ENCODE measurements at regions of chr19 and their contacts with region 1.

Region 1: DNA sequence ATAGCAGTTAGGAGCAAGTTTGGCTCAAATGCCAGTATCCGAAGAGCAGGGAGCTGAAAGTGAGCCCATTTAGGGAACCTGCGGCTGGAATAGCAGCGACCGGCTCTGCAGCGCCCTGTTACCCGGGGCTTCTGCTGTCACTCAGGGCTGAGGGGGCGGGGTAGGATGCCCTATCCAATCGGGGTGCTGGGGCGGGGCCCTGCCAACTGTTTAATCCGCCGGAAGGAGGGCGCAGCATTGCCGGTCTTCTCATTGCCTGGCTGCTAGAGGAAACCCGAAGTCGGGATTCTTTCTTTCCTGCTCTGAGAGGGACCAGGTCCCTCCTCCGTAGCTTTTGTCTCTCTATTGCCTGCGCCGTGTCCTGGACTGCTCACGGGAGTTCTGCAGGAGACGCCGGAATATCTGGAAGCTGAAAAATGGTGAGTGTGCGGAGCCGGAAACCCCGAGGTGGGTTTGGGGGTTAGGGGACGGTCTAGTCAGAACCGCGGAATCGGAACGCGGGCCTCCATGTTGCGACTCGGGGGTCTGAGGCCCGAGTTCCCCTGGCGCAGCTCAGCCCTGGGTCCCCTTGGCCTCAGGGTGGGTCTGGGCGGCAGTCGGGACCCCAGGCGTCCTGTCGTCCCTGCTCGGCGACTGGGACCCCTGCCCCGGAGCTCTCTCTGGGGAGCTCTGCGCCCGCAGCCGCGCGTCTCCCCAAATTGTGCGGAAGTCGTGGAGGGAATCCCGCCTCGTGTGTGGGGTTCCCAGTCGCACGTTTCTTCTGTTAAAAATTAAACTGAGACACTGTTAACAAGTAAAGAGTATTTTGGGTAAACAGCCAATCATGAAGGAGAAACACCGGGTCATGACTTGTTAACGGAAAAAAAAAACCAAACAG is 22.8 kb downstream of the ZNF763 start:
- DNase-seq: peak; percentile 95 to 99 (median 98)
- H3K4me3 ChIP-seq: peak overlapping the region; percentile 92 to 99 (median 98)
- H3K27ac ChIP-seq: peak overlapping the region; percentile 91 to 94
- H3K4me1 ChIP-seq: peaks cover 0 to 13% (median 12%) of the 10 kb centered on the region in 4 experiments
- H3K27me3 ChIP-seq: no peaks in the 10 kb centered on the region

Region 2: DNA sequence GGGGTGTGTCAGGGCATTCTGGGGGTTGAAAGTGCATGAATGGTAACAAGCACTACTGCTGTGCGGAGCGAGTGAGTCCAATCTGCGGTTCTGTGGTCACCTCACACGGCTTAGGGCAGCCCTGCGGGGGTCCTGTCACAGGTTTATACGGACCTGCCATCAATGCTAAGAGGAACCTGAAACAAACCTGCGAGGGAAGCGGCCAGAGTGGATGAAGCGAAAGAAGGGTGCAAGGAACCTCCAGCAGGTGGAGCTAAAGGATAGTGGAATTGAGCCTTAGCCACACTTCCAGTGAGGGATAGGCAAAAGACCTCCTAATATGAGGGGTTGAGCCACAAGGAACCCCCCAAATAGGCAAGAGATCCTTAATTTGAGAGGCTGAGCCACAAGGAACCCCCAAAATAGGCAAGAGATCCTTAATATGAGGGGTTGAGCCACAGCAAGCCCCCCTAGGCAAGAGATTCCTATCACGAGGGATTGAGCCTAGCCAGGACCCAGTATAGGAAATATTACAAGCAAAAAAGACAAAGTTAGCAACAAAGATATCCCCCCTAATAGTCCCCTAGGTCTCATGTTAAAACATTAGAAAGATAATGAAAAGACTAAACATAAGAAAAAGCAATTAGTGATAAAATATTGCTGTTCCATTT is 106.4 kb before region 1 on chr19:
- CTCF ChIA-PET with region 1: interaction called, 17 read pairs
- POLR2A ChIA-PET with region 1: no interaction called
- DNase-seq: peak; percentile 76 to 88 (median 83)
- H3K4me3 ChIP-seq: peak overlapping the region in 1 of 7 experiments; percentile 38
- H3K27ac ChIP-seq: no peak overlapping the region
- H3K4me1 ChIP-seq: peaks cover 0 to 21% (median 9%) of the 10 kb centered on the region in 4 experiments
- H3K27me3 ChIP-seq: no peaks in the 10 kb centered on the region

Region 3: DNA sequence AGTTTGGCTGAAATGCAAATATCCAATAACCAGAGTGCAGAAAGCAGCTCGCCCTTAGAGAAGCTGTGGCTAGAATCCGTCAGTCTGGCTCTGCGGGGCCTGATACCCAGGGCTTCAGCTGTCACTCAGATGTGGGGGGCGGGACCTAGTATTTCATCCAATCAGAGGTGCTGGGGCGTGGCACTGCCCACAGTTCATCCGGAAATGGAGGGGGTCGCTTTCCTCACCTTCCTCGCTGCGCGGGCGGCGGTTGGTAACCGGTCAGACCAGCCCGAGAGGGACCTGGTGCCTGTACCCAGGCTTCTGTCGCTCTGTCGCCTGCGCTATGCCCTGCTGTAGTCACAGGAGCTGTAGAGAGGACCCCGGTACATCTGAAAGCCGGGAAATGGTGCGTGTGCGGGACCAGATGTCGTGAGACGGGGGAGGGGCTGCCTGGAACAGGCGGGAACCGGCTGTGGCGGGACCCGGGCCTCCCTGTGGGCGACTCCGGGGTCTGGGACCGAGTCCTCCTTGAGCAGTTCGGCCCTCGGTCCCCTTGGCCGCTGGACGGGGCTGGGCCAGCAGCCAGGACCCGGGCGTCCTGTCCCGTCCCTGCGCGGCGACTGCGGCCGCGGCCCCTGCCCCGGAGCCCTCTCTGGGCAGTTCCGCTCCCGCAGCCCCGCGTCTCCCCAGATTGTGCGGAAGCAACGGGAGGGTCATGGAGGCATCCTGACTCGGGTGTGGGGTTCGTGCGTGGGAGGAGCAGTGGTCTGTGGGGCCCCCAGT is 62.6 kb before region 1 on chr19 and contains the start of gene ZNF700:
- CTCF ChIA-PET with region 1: interaction called, 65 read pairs
- POLR2A ChIA-PET with region 1: interaction called, 19 read pairs
- DNase-seq: peak; percentile 92 to 95 (median 95)
- H3K4me3 ChIP-seq: peak within 1 kb of the TSS; percentile 84 to 98 (median 91)
- H3K27ac ChIP-seq: peak within 1 kb of the TSS; percentile 83 to 92
- H3K4me1 ChIP-seq: peaks cover 7 to 33% (median 32%) of the 10 kb centered on the region in 4 experiments
- H3K27me3 ChIP-seq: no peaks in the 10 kb centered on the region

Region 4: DNA sequence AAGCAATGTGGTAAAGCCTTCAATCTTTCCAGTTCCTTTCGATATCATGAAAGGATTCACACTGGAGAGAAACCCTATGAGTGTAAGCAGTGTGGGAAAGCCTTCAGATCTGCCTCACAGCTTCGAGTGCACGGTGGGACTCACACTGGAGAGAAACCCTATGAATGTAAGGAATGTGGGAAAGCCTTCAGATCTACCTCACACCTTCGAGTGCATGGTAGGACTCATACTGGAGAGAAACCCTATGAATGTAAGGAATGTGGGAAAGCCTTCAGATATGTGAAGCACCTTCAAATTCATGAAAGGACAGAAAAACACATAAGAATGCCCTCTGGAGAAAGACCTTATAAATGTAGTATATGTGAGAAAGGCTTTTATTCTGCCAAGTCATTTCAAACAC is 38.4 kb before region 1 on chr19:
- CTCF ChIA-PET with region 1: no interaction called
- POLR2A ChIA-PET with region 1: no interaction called
- DNase-seq: peak; percentile 7 to 58 (median 34)
- H3K4me3 ChIP-seq: no peak overlapping the region
- H3K27ac ChIP-seq: no peak overlapping the region
- H3K4me1 ChIP-seq: no peaks in the 10 kb centered on the region
- H3K27me3 ChIP-seq: no peaks in the 10 kb centered on the region

Region 5: GRCh38 chr19:11964858-11965645 is 22.6 kb before region 1 on chr19 and contains the start of gene ZNF763:
- CTCF ChIA-PET with region 1: interaction called, 47 read pairs
- POLR2A ChIA-PET with region 1: interaction called, 22 read pairs
- DNase-seq: peak; percentile 91 to 96 (median 96)
- H3K4me3 ChIP-seq: peak within 1 kb of the TSS; percentile 73 to 100 (median 94)
- H3K27ac ChIP-seq: peak within 1 kb of the TSS; percentile 83 to 91
- H3K4me1 ChIP-seq: peaks cover 0 to 22% (median 18%) of the 10 kb centered on the region in 4 experiments
- H3K27me3 ChIP-seq: no peaks in the 10 kb centered on the region

Region 6: DNA sequence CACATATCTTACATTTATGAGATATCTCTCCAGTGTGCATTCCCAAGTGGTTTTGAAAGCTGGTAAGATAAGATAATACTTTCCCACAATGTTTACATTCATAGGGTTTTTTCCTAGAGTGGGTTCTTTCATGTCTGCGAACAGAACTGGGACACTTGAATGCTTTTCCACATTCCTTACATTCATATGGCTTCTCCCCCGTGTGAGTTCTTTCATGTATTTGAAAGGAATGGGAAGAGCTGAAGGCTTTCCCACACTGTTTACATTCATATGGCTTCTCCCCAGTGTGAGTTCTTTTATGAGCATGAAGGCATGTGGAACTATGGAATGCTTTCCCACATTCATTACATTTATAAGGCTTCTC is 28.1 kb after region 1 on chr19:
- CTCF ChIA-PET with region 1: no interaction called
- POLR2A ChIA-PET with region 1: no interaction called
- DNase-seq: no peak
- H3K4me3 ChIP-seq: no peak overlapping the region
- H3K27ac ChIP-seq: no peak overlapping the region
- H3K4me1 ChIP-seq: no peaks in the 10 kb centered on the region
- H3K27me3 ChIP-seq: no peaks in the 10 kb centered on the region

Region 7: DNA sequence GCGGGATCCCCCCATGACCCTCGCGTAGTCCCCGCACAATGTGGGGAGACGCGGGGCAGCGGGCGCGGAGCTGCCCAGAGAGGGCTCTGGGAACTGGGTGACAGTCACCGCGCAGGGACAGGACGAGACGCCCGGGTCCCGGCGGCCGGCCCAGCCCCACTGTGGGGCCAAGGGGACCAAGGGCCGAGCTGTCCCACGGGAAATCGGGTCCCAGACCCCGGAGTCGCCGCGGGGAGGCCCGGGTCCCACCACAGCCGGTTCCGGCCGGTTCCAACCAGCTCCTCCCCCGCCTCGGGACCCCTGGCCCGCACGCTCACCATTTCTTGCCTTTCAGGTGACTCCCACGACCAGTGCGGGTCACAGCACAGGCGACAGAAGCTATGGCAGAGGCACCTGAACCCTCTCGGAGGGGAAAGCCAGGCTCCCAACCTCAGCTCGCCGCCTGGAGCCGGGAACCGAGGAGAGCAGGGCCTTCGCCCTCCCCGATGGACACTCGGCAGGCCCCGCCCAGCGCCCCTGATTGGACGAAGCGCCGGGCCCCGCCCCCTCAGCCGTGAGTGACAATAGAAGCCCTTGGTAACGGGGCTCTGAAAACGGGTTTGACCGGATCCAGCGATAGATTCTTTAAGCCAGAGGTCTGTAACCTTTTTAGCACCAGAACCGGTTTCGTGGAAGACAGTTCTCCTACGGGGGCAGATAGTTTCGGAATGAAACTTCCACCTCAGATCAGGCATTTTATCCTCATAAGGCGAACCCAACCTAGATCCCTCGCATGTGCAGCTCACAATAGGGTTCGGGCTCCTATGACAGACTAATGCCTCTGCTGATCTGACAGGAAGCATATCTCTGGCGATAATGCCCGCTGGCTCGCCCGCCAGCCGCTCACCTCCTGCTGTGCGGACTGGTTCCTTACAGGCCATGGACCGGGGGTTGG is 47.8 kb after region 1 on chr19 and contains the start of gene ZNF433:
- CTCF ChIA-PET with region 1: interaction called, 11 read pairs
- POLR2A ChIA-PET with region 1: no interaction called
- DNase-seq: peak; percentile 78 to 85 (median 80)
- H3K4me3 ChIP-seq: peak within 1 kb of the TSS; percentile 49 to 97 (median 81)
- H3K27ac ChIP-seq: peak within 1 kb of the TSS; percentile 15 to 70
- H3K4me1 ChIP-seq: peaks cover 7 to 20% (median 11%) of the 10 kb centered on the region in 4 experiments
- H3K27me3 ChIP-seq: no peaks in the 10 kb centered on the region

Measured in common myeloid progenitor, CD34-positive (primary cell).